Activated CD4-positive, alpha-beta T cell treated with anti-CD3 and anti-CD28 coated beads, Interleukin-2, amount 10 ng/mL, durations not matched to agents 24 days and 14 days (primary cell): ENCODE measurements at regions of chr1 and their contacts with region 1.

Region 1: DNA sequence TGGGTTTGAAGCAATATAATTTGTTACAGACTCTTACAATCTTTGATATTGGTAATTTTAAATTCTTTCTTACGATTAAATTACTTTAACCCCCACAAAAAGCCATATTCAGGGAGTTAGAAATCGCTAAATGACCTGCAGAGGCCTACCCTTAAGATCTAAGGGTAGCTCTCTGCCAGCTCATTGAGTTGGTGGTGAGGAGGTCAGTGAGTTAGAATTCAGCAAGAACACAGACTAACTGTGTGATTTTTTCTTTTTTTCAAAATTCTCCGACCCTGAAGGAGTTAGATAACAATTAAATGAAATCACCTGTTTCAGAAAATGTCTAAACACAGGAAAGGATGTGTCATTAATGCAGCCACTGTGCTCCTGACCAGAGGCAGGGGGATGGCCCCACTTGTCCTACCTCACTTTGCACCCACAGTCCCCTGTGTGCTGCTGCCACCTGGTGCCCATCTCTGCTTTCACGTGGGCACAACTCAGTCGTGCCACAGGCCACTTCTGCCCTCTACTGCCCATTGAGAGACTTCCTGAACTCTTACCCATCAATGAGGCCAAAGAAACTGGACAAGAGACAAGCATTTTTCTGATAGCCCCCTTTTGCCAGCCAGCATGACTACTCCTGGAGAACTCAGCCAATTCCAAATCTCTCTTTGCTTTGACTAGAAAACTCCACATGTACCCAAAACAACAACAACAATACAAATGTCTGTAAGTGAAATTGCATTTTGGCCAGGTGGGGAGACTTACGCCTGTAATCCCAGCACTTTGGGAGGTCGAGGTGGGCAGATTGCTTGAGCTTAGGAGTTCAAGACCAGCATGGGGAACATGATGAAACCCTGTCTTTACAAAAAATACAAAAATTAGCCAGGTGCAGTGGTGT is 8.4 kb downstream of the CFAP45 start:
- DNase-seq: peak; percentile 92
- H3K4me3 Mint-ChIP-seq: no peak overlapping the region
- H3K27ac Mint-ChIP-seq: no peak overlapping the region
- H3K4me1 Mint-ChIP-seq: peaks cover 13% of the 10 kb centered on the region
- H3K27me3 Mint-ChIP-seq: peaks cover 27% of the 10 kb centered on the region

Region 2: DNA sequence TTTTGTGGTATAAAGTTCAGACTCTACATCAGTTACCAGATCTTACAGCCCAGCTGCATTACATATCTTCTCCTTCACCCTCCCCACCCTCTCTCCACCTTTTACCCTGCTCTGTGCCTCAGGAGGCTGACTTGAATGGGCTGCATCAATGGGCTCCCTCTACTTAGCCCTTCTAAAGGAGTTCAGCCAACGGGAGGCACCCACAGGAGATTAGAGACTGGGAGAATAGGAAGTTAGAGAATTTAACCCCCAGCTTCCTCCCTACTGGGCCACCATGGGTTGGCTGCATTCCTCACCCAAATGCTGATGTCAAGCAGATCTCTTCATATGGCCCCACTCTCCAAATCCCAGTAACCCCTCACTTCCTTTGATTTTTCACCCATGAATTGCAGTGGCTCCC is 127.8 kb before region 1 on chr1:
- intact Hi-C with region 1: no loop called
- DNase-seq: no peak
- H3K4me3 Mint-ChIP-seq: no peak overlapping the region
- H3K27ac Mint-ChIP-seq: no peak overlapping the region
- H3K4me1 Mint-ChIP-seq: no peaks in the 10 kb centered on the region
- H3K27me3 Mint-ChIP-seq: peaks cover 1% of the 10 kb centered on the region

Region 3: DNA sequence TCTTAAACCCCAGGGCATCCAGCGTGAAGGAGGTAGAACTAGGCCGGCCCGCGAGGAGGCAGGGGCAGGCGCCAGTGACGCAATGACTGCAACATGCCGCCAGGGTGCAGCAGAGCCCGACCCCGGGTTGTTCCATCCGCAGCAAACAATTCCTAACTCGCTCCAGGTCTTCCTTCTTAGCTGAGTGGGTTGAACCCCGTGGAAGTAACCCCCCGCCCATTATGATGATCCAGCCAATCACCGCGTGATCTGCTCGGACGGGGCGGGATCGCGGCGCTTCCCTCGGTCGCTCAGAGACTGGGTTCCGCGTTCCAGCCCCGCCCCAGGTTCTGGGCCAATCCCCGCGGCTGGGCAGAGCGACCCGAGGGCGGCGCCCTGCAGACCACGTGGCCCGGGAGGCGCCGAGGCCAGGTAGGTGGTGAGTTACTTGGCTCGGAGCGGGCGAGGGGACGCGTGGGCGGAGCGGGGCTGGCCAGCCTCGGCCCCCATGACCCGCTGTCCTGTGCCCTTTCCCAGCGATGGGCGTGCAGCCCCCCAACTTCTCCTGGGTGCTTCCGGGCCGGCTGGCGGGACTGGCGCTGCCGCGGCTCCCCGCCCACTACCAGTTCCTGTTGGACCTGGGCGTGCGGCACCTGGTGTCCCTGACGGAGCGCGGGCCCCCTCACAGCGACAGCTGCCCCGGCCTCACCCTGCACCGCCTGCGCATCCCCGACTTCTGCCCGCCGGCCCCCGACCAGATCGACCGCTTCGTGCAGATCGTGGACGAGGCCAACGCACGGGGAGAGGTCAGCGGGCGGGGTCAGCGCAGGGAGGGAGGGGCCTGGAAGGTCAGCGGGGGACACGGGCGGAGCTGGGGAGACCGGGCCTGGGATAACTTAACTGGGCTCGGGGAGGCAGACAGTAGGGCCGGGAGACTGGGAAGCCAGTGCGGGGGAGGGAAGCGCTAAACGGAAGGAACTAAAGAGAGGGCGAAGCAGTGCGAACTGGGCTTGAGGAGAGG is 110.6 kb before region 1 on chr1 and contains the start of gene DUSP23:
- intact Hi-C with region 1: loop called (anchors 1 kb)
- DNase-seq: peak; percentile 99
- H3K4me3 Mint-ChIP-seq: peak within 1 kb of the TSS; percentile 80
- H3K27ac Mint-ChIP-seq: peak within 1 kb of the TSS; percentile 30
- H3K4me1 Mint-ChIP-seq: peaks cover 7% of the 10 kb centered on the region
- H3K27me3 Mint-ChIP-seq: peaks cover 19% of the 10 kb centered on the region
- total RNA-seq, gene DUSP23: 30.9 and 33.0 TPM in 2 replicates

Region 4: GRCh38 chr1:159798893-159799292 is 92.6 kb before region 1 on chr1:
- intact Hi-C with region 1: loop called (anchors 1 kb)
- DNase-seq: peak; percentile 83
- H3K4me3 Mint-ChIP-seq: no peak overlapping the region
- H3K27ac Mint-ChIP-seq: no peak overlapping the region
- H3K4me1 Mint-ChIP-seq: peaks cover 18% of the 10 kb centered on the region
- H3K27me3 Mint-ChIP-seq: peaks cover 53% of the 10 kb centered on the region

Region 5: DNA sequence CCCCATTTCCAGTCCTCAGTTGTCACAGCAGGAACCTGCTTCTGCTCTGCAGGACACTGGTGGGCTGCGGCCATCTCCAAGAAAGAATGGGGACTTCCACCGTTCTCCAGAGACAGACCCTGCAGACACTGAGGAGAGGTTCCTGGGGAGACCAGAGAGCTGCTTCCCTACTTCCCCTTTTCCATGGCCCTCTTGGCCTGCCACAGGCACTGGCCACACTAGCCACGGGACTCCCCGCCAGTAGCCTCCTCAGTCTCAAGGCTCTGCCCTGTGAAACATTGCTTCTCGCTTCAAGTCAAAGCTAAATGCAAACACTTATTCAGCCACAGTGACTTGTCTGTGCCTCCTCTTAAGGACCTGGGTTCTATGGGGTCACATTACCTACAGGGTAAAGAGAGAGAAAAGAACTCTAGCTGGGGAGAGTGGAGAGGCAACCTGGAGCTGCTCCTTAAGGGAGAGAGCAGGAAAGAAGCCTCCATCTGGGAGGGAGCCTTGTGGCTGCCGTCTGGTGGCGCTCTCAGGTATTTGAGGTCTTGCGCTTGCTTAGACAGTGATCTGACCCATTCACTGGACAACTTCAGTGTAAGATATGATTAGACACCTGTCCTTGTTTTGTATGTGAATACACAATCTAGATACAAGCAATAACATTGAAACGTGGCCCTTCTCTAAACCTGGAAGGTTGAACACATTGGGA is 70.2 kb before region 1 on chr1:
- intact Hi-C with region 1: loop called (anchors 1 kb)
- DNase-seq: peak; percentile 78
- H3K4me3 Mint-ChIP-seq: no peak overlapping the region
- H3K27ac Mint-ChIP-seq: no peak overlapping the region
- H3K4me1 Mint-ChIP-seq: peaks cover 26% of the 10 kb centered on the region
- H3K27me3 Mint-ChIP-seq: peaks cover 36% of the 10 kb centered on the region

Region 6: GRCh38 chr1:159854693-159855192 is 36.8 kb before region 1 on chr1:
- intact Hi-C with region 1: loop called (anchors 5 kb)
- DNase-seq: peak; percentile 91
- H3K4me3 Mint-ChIP-seq: peak overlapping the region; percentile 84
- H3K27ac Mint-ChIP-seq: no peak overlapping the region
- H3K4me1 Mint-ChIP-seq: peaks cover 14% of the 10 kb centered on the region
- H3K27me3 Mint-ChIP-seq: peaks cover 36% of the 10 kb centered on the region

Region 7: GRCh38 chr1:160006312-160006940 is 114.9 kb after region 1 on chr1:
- intact Hi-C with region 1: loop called (anchors 2 kb)
- DNase-seq: peak; percentile 91
- H3K4me3 Mint-ChIP-seq: no peak overlapping the region
- H3K27ac Mint-ChIP-seq: no peak overlapping the region
- H3K4me1 Mint-ChIP-seq: no peaks in the 10 kb centered on the region
- H3K27me3 Mint-ChIP-seq: peaks cover 21% of the 10 kb centered on the region